Breast epithelium (tissue), 4 donors: ENCODE measurements at regions of chr9 and their contacts with region 1.

Region 1: GRCh38 chr9:37746848-37747753 is 6.5 kb upstream of the TRMT10B start:
- DNase-seq: peak in 1 of 2 donors; percentile 40
- H3K4me3 ChIP-seq: no peak overlapping the region
- H3K27ac ChIP-seq: no peak overlapping the region
- H3K4me1 ChIP-seq: no peaks in the 10 kb centered on the region
- H3K27me3 ChIP-seq: no peaks in the 10 kb centered on the region
- CTCF ChIP-seq: peak; percentile 64 to 71 (median 67)
- POLR2A ChIP-seq: no peak

Region 2: DNA sequence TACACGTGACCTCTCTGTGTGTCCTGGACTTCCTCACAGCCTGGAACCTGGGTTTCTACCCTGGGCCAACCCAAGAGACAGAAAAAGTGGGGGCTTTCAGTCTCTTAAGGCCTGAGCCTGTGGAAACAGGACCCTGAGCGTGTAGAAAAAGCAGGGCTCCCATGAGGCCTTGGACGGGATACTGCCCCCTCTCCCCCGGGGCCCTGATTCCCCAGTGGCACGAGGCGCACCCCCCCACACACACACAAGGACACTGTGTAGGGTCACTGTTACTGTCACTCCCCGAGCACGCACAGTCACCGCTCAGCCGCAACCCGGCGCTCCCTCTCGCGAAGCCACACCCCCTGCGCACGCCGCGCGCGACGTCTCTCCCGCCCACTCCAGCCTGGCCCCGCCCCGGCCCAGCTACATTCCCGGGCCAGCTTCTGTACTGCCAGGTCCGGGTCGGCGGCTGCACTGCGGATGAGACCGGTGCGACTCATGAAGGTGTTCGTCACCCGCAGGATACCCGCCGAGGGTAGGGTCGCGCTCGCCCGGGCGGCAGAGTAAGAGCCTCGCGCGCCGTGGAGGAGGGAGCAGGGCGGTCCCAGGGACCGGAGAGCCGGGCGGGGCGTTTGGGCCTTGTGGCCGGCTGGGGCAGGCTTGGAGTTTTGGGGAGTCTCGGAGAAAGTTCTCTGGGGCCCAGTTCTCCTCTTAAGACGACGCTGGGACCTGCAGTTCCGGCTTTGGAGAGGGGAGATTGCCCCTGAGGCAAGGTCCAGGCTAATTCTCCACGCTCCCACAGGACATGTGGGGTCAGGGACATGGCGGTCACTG is 324.6 kb before region 1 on chr9 and contains the start of gene GRHPR:
- intact Hi-C with region 1: loop called (anchors 10 kb)
- DNase-seq: peak; percentile 77 to 89
- H3K4me3 ChIP-seq: peak within 1 kb of the TSS; percentile 71 to 75 (median 73)
- H3K27ac ChIP-seq: peak within 1 kb of the TSS; percentile 84 to 89
- H3K4me1 ChIP-seq: peaks cover 12 to 23% of the 10 kb centered on the region in 2 donors
- H3K27me3 ChIP-seq: no peaks in the 10 kb centered on the region
- CTCF ChIP-seq: no peak
- POLR2A ChIP-seq: peak; percentile 51
- total RNA-seq, gene GRHPR: 117 to 144 (median 140) TPM

Region 3: GRCh38 chr9:38352530-38353328 is 605.6 kb after region 1 on chr9:
- intact Hi-C with region 1: loop called (anchors 5 kb)
- DNase-seq: no peak
- H3K4me3 ChIP-seq: no peak overlapping the region
- H3K27ac ChIP-seq: no peak overlapping the region
- H3K4me1 ChIP-seq: no peaks in the 10 kb centered on the region
- H3K27me3 ChIP-seq: no peaks in the 10 kb centered on the region
- CTCF ChIP-seq: no peak
- POLR2A ChIP-seq: no peak

Region 4: DNA sequence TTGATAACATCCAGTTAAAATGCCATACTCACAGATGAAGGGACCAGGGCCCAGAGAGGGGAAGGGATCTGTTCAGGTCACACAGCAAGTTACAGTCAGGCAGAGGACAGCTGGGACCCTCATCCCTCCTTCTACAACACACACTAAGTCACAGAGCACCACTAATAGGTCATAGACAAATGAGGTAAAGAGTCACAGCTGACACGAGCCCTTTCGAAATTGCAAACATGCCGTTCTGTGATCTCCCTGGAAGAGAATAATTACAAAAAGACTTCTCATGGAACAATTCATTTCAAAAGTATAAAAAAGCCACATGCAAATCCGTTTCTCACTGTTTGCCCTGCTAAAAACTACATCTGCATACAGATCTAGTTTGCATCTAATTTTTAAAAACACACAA is 661.6 kb after region 1 on chr9:
- intact Hi-C with region 1: loop called (anchors 10 kb)
- DNase-seq: no peak
- H3K4me3 ChIP-seq: no peak overlapping the region
- H3K27ac ChIP-seq: no peak overlapping the region
- H3K4me1 ChIP-seq: no peaks in the 10 kb centered on the region
- H3K27me3 ChIP-seq: peaks cover 0 to 19% of the 10 kb centered on the region in 2 donors
- CTCF ChIP-seq: no peak
- POLR2A ChIP-seq: no peak